Natural killer cell (primary cell): ENCODE measurements at regions of chr4 and their contacts with region 1.

Region 1: GRCh38 chr4:125314676-125315575 is at the start of gene FAT4:
- DNase-seq: peak; percentile 36 to 74
- ATAC-seq: peak; percentile 81 to 86 (median 84)
- H3K4me3 ChIP-seq: peak within 1 kb of the TSS; percentile 77
- H3K4me3 Mint-ChIP-seq: peak within 1 kb of the TSS; percentile 96
- H3K27ac ChIP-seq: peak within 1 kb of the TSS; percentile 62
- H3K27ac Mint-ChIP-seq: peak within 1 kb of the TSS; percentile 78 to 92
- H3K4me1 ChIP-seq: peaks cover 36% of the 10 kb centered on the region
- H3K4me1 Mint-ChIP-seq: peaks cover 39 to 57% of the 10 kb centered on the region in 2 donors
- H3K27me3 ChIP-seq: peaks cover 2% of the 10 kb centered on the region
- H3K27me3 Mint-ChIP-seq: peaks cover 10 to 11% of the 10 kb centered on the region in 2 donors
- CTCF ChIP-seq: no peak
- total RNA-seq, gene FAT4: 4.5 to 8.0 (median 5.1) TPM

Region 2: DNA sequence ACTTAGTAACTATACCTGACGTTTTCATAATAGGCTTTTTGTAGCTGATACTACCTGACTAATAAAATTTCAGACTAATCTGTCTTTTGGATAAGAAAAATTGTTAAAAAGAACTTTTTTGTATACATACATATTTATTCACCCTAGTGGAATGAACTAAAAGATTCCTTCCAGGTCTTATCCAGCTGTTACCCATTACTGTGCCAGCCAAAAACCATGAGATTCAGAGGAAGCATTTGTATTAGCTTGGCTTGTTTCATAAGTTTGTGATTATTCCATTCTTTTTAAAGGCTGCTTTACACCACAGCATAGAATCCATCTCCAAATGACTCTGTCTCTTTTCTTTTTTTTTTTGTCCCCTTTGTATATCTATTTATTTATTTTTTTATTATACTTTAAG is 149.2 kb after region 1 on chr4:
- intact Hi-C with region 1: loop called (anchors 10 kb)
- DNase-seq: no peak
- ATAC-seq: no peak
- H3K4me3 ChIP-seq: no peak overlapping the region
- H3K4me3 Mint-ChIP-seq: no peak overlapping the region
- H3K27ac ChIP-seq: no peak overlapping the region
- H3K27ac Mint-ChIP-seq: no peak overlapping the region
- H3K4me1 ChIP-seq: no peaks in the 10 kb centered on the region
- H3K4me1 Mint-ChIP-seq: peaks cover 23 to 26% of the 10 kb centered on the region in 2 donors
- H3K27me3 ChIP-seq: no peaks in the 10 kb centered on the region
- H3K27me3 Mint-ChIP-seq: no peaks in the 10 kb centered on the region
- CTCF ChIP-seq: no peak

Region 3: DNA sequence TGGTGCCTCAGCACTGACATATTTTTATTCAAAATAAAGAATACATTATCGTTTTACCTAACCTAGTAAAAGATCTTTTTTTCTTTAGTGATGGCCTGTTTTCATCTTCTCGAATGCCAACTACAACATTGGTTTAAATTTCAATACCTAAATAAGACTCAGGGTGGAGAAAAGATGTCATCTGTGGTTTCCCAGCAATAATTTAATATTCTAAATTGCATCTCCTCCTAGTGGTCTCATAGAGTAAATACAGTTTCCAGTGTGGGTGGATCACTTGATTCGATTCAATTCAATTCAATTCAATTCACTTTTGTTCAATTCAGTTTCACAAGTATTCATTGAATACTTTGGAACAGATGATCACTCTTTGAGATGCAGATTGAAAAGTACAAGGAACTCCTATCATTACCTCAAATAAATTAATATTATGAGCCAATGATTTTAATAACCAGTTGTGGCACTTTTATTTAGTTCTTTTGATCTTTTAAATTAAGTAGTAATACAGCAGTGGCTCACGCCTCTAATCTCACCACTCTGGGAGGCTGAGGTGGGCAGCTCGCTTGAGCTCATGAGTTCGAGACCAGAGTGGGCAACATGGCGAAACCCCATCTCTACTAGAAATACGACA is 427.0 kb after region 1 on chr4:
- intact Hi-C with region 1: loop called (anchors 1 kb)
- DNase-seq: no peak
- ATAC-seq: peak in 2 of 3 donors; percentile 55 to 65
- H3K4me3 ChIP-seq: no peak overlapping the region
- H3K4me3 Mint-ChIP-seq: no peak overlapping the region
- H3K27ac ChIP-seq: no peak overlapping the region
- H3K27ac Mint-ChIP-seq: no peak overlapping the region
- H3K4me1 ChIP-seq: no peaks in the 10 kb centered on the region
- H3K4me1 Mint-ChIP-seq: no peaks in the 10 kb centered on the region
- H3K27me3 ChIP-seq: no peaks in the 10 kb centered on the region
- H3K27me3 Mint-ChIP-seq: peaks cover 0 to 3% of the 10 kb centered on the region in 2 donors
- CTCF ChIP-seq: peak; percentile 76